ENCODE measurements at regions of chr10 and their contacts with region 1.

Region 1: DNA sequence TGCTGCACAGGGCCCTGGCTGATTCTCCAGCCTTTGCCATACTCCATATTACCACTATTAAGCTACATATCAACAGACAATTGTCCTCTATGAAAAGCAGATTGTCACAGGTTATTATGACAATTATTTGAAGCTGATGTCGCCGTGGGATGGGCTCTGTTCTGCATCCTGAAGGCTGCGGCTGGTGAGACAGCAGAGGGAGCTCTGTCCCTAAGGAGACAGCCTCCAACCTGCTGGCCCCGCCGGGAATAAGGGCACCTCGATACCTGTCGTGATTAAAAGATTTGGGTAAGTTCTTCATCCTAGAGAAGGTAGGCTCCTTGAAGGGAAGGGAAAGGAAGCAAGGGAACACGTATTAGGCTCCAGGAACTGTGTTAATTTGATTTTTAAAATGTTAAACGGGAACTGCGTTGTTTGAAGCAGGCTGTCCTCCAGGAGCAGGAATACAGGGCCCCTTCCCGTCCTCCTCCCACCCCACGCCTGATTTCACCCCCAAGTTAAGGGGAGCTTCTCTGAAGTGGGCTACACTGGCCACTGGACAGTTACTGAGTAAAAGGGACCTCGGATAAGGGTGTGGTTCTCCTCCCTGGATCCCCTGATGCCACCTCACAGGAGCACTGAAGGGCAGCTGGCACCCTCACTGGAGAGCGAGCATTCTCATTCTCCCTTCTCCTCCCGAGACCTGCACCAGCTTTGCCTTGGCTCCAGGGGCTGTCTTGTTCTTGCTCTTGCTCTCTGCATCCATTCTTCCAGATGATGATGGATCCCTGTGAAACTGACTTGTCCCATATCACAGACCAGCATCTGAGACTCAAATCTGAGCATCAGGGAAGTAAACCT is 11.8 kb upstream of the TIAL1 start:
- DNase-seq: peak; percentile 63
- ATAC-seq: peak; percentile 100
- H3K4me3 ChIP-seq: no peak overlapping the region
- H3K27ac ChIP-seq: no peak overlapping the region
- H3K4me1 ChIP-seq: peaks cover 5% of the 10 kb centered on the region; the same call in 1 of the 2 replicates
- H3K27me3 ChIP-seq: no peaks in the 10 kb centered on the region
- CTCF ChIP-seq: peak; percentile 90

Region 2: GRCh38 chr10:118531105-118531852 is 1077.3 kb before region 1 on chr10:
- CTCF ChIA-PET with region 1: no interaction called
- POLR2A ChIA-PET with region 1: no interaction called
- intact Hi-C with region 1: no loop called
- DNase-seq: no peak
- ATAC-seq: no peak
- H3K4me3 ChIP-seq: no peak overlapping the region
- H3K27ac ChIP-seq: no peak overlapping the region
- H3K4me1 ChIP-seq: no peaks in the 10 kb centered on the region
- H3K27me3 ChIP-seq: peaks cover 2% of the 10 kb centered on the region; the same call in 1 of the 2 replicates
- CTCF ChIP-seq: no peak

Region 3: GRCh38 chr10:119207367-119207668 is 401.2 kb before region 1 on chr10 and contains the start of gene GRK5:
- CTCF ChIA-PET with region 1: no interaction called
- POLR2A ChIA-PET with region 1: no interaction called
- intact Hi-C with region 1: no loop called
- DNase-seq: peak; percentile 93
- ATAC-seq: peak; percentile 77
- H3K4me3 ChIP-seq: peak within 1 kb of the TSS; percentile 78
- H3K27ac ChIP-seq: peak within 1 kb of the TSS; percentile 56
- H3K4me1 ChIP-seq: peaks cover 43% of the 10 kb centered on the region
- H3K27me3 ChIP-seq: no peaks in the 10 kb centered on the region
- CTCF ChIP-seq: no peak
- total RNA-seq, gene GRK5: 4.5 and 5.0 TPM in 2 replicates

Region 4: DNA sequence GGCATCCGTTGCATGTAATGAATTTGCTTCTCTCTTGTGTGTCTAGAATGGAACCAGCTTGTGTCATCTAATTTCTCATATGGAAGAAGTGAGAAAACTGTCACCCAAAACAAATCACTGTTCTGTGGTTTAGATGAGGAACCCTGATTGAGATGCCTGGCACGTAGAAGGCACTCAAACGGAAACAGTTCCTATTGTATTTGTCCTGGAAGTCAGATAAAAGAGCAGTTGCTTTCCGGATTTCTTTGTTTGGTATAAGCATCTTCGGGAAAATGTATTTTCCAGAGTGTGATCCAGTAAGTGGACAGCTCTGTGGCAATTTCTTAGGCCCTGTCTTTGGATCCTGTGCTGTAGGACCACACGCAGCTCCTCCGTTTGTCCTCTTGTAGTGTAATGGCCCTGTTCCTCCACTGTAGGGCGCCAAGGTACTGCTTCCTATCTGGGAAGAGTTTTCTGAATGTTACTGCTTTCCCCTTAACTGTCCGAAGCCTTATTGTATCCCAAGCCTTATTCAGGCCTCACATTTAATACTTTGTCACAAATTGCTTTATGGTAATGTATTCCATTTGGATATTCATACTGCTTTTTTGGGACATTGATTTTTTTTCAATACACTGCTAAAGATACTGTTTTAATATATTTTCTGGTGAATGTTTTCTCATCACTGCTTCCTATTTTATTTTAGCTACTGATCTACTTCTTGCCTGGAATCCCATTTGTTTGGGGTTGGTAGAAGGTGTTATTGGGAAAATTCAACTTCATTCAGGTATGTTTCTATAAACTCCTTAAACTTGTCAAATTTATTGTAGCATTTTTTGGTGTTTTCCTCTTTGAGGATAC is 142.1 kb after region 1 on chr10:
- CTCF ChIA-PET with region 1: interaction called, 5 read pairs
- POLR2A ChIA-PET with region 1: no interaction called
- intact Hi-C with region 1: loop called (anchors 1 kb)
- DNase-seq: peak; percentile 70
- ATAC-seq: peak; percentile 81
- H3K4me3 ChIP-seq: no peak overlapping the region
- H3K27ac ChIP-seq: no peak overlapping the region
- H3K4me1 ChIP-seq: no peaks in the 10 kb centered on the region
- H3K27me3 ChIP-seq: no peaks in the 10 kb centered on the region
- CTCF ChIP-seq: peak; percentile 83

Measured in PC-3 (cell line).